Activated T-helper 2 cell treated with anti-CD3 and anti-CD28 coated beads, Interferon-gamma antibody, Interleukin-2, Interleukin-4, amounts not matched to agents 10 μg/mL and 5 μg/mL and 100 μg/mL, durations not matched to agents 14 hours and 24 hours and 36 hours (primary cell): ENCODE measurements at regions of chr5 and their contacts with region 1.

Region 1: DNA sequence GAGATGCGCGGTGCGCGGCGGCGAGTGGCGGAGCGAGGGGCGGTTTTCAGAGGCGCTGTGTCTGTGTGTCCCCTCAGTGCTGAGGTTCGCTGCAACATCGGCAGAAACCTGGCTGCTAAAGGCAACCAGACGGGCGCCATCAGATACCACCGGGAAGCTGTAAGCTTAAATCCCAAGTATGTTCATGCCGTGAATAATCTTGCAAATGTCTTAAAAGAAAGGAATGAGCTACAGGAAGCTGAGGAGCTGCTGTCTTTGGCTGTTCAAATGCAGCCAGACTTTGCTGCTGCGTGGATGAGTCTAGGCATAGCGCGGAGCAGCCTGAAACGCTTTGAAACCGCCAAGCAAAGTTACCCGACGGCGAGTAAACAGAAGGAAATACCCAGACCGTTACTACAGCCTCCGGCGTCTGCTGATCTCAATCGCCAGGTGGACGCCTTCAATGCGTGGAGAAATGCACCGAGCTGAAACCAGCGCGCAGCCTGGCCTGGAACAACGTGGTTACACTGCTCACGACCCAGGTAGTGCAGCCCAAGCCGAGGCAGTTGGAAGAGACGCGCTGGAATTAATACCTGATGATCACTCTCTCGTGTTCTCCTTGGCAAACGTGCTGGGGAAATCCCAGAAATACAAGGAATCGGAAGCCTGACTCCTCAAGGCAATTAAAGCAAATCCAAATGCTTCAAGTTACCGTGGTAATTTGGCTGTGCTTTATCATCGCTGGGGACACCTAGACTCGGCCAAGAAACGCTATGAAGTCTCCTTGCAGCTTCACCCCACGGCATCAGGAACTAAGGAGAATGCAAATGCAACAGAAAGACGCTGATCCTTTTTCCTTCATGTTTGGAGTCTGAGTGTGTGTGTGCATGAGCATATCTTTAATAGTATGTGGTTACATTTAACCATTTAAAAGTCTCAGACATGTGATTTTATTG is 15.9 kb downstream of the OR2V1 start:
- DNase-seq: no peak
- H3K4me3 Mint-ChIP-seq: no peak overlapping the region
- H3K27ac Mint-ChIP-seq: no peak overlapping the region
- H3K4me1 Mint-ChIP-seq: peaks cover 10% of the 10 kb centered on the region
- H3K27me3 Mint-ChIP-seq: peaks cover 60% of the 10 kb centered on the region

Region 2: GRCh38 chr5:181059297-181060230 is 55.5 kb before region 1 on chr5:
- intact Hi-C with region 1: loop called (anchors 5 kb)
- DNase-seq: no peak
- H3K4me3 Mint-ChIP-seq: no peak overlapping the region
- H3K27ac Mint-ChIP-seq: no peak overlapping the region
- H3K4me1 Mint-ChIP-seq: no peaks in the 10 kb centered on the region
- H3K27me3 Mint-ChIP-seq: peaks cover 81% of the 10 kb centered on the region

Region 3: GRCh38 chr5:181100121-181101015 is 14.7 kb before region 1 on chr5:
- intact Hi-C with region 1: no loop called
- DNase-seq: no peak
- H3K4me3 Mint-ChIP-seq: no peak overlapping the region
- H3K27ac Mint-ChIP-seq: no peak overlapping the region
- H3K4me1 Mint-ChIP-seq: peaks cover 6% of the 10 kb centered on the region
- H3K27me3 Mint-ChIP-seq: peaks cover 32% of the 10 kb centered on the region

Region 4: GRCh38 chr5:181217111-181217802 is 102.1 kb after region 1 on chr5:
- intact Hi-C with region 1: no loop called
- DNase-seq: peak; percentile 57
- H3K4me3 Mint-ChIP-seq: peak overlapping the region; percentile 88
- H3K27ac Mint-ChIP-seq: peak overlapping the region; percentile 91
- H3K4me1 Mint-ChIP-seq: peaks cover 43% of the 10 kb centered on the region
- H3K27me3 Mint-ChIP-seq: peaks cover 4% of the 10 kb centered on the region